ENCODE measurements at regions of chr16 and their contacts with region 1.

Region 1: DNA sequence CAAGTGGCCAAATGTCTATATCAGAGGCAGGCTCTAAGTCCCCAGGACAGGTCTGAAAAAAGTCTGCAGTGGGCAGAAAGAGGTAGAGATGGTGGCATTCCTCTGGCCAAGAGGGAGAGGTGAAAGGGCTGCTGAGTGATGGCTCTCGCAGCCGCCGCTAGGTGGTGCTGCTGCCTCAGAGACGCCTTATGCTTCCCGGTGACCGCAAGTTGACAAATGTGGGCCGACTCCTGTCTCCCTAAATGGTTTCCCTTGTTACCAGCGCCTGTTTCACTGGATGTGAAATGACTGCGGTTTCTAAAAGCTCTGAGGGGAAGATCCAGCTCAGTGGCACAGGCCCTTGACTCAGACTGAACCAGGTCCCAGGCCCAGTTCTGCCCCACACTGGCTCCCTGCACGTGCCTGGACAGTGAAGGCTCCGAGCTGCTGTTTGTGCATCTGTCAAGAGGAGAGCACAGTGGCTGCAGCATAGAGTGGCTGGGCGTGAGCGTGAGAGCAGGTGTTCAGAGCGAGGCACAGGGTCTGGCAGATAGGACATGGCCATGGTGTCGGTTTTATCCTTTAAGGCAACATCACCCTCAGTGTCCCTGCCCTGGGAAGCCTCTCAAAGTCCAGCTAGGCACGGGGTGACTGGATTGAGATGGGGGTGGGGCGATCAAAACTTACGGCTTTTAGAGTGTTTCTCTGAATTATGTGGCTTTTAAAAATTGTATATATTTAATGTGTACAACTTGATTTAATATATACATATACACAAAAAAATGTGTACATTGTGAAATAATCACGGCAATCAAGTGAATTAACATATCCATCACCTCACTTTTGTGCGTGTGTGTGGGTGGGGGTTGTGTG is 19.9 kb downstream of the CLEC16A start:
- DNase-seq: peak; percentile 74
- H3K4me3 Mint-ChIP-seq: peak overlapping the region; percentile 68
- H3K27ac Mint-ChIP-seq: peak overlapping the region; percentile 97
- H3K4me1 Mint-ChIP-seq: peaks cover 75% of the 10 kb centered on the region
- H3K27me3 Mint-ChIP-seq: no peaks in the 10 kb centered on the region

Region 2: GRCh38 chr16:10362077-10362863 is 602.0 kb before region 1 on chr16:
- intact Hi-C with region 1: no loop called
- DNase-seq: peak; percentile 11
- H3K4me3 Mint-ChIP-seq: peak overlapping the region; percentile 32
- H3K27ac Mint-ChIP-seq: peak overlapping the region; percentile 74
- H3K4me1 Mint-ChIP-seq: peaks cover 20% of the 10 kb centered on the region
- H3K27me3 Mint-ChIP-seq: no peaks in the 10 kb centered on the region

Region 3: DNA sequence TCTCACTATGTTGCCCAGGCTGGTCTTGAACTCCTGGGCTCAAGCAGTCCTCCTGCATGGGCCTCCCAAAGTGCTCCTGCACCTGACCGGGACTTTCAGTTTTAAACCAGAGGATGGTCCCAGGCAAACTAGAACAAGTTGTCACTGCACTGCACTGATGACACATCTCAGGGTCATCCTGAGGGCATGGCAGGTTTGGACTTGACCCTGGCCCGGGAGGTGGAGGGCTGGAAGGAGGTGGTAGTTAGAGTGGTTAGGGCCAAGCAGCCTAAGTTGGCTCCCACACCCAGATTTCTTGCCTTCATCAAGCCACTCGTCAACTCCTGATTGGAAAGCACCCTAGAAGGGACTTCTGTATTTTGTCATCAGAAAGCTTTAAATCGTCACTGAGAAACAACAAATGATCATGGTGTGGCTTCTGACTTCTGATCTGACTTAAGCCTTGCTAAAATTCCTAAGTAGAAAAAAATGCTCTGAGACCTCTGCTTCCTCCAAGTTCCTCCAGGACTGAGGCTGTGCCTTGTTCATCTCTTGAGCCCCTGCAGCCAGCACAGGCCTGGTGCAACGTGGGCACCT is 427.4 kb before region 1 on chr16:
- intact Hi-C with region 1: no loop called
- DNase-seq: no peak
- H3K4me3 Mint-ChIP-seq: no peak overlapping the region
- H3K27ac Mint-ChIP-seq: no peak overlapping the region
- H3K4me1 Mint-ChIP-seq: no peaks in the 10 kb centered on the region
- H3K27me3 Mint-ChIP-seq: no peaks in the 10 kb centered on the region

Region 4: DNA sequence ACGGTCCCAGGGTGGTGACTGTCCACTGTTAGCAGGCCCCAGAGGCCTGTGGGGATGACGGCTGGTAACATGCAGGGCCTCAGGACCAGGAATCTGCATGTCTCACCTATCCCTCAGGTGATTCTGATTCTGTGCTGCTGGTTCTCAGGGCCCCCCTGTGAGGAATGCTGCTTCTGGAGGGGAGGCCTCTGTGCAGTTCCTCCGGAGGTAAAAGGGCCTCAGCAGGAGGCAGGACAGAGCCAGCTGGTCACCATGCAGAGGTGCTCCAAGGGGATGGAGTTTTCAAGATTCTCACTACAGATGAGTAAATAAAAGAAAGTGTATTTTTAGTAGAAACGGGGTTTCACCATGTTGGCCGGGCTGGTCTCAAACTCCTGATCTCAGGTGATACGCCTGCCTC is 13.9 kb after region 1 on chr16:
- intact Hi-C with region 1: no loop called
- DNase-seq: no peak
- H3K4me3 Mint-ChIP-seq: no peak overlapping the region
- H3K27ac Mint-ChIP-seq: peak overlapping the region; percentile 16
- H3K4me1 Mint-ChIP-seq: peaks cover 67% of the 10 kb centered on the region
- H3K27me3 Mint-ChIP-seq: no peaks in the 10 kb centered on the region

Region 5: DNA sequence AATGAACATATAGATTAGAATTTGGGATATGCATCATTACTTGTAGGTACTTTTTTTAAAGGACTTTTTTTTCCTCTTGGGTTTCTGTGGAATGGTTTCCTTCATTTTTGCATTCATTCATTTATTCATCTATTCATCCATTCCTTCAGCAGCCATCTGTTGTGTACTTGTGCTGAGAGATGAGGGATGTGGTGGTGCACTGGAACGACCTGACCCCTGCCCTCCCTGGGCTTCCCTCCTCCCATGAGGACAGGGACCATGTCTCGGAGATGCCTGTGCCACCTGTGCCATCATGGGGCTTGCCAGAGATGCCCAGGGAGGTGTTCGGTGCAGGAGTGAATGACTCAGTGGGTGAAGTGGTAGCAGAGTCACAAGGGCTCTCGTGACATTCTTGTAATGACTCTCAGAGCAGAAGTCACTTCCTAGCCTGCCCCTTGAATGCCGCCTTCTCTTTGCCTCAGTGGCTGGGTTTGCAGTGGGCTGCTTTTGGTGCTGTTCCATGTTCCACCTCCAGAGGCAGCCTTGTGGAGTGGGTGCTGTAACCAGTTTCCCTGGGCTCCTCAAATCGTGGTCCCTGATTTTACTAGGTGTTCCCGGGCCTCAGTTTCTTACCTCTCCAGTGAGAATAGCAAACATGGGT is 24.0 kb after region 1 on chr16:
- intact Hi-C with region 1: loop called (anchors 1 kb)
- DNase-seq: peak; percentile 64
- H3K4me3 Mint-ChIP-seq: peak overlapping the region; percentile 65
- H3K27ac Mint-ChIP-seq: peak overlapping the region; percentile 93
- H3K4me1 Mint-ChIP-seq: peaks cover 92% of the 10 kb centered on the region
- H3K27me3 Mint-ChIP-seq: no peaks in the 10 kb centered on the region

Region 6: DNA sequence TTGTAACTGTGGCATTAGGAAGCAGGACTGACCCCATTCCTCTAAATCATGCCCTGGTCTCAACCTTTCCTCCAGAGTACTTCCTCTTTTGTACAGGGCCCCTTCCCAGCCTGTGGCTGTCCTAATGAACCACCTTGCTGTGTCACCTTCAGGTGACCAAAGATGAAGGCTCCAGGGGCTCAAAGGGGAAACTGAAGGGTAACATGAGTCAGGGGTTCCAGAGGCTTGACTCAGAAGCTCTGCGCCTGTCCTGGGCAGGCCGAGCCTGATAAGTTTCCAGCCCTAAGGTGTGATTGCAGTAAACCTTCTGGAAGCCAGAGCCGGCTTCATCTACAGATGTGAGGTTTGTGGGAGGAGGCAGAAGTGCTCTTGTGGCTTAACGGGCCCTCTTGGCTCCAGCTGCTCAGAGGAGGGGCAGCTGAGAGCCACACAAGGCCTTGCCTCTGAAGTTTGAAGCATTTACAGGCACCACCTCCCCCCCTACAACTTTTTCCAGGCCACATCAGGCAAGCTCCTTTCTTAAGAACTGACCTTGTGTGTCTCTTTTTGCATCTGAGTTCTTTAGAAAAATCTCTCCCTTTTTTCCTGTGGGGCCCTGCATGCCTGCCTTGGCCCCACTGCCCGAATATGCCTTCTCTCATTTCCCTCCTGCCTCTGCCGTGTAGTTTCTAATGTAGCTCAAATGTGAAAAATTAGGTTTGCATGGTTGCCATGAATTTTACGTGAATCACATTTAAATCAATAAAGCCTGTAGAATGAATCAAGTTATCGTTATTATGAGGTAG is 130.0 kb after region 1 on chr16:
- intact Hi-C with region 1: loop called (anchors 1 kb)
- DNase-seq: peak; percentile 56
- H3K4me3 Mint-ChIP-seq: peak overlapping the region; percentile 68
- H3K27ac Mint-ChIP-seq: peak overlapping the region; percentile 100
- H3K4me1 Mint-ChIP-seq: peaks cover 70% of the 10 kb centered on the region
- H3K27me3 Mint-ChIP-seq: no peaks in the 10 kb centered on the region

Region 7: GRCh38 chr16:11232852-11233726 is 268.8 kb after region 1 on chr16:
- intact Hi-C with region 1: loop called (anchors 1 kb)
- DNase-seq: peak; percentile 91
- H3K4me3 Mint-ChIP-seq: peak overlapping the region; percentile 59
- H3K27ac Mint-ChIP-seq: peak overlapping the region; percentile 95
- H3K4me1 Mint-ChIP-seq: peaks cover 89% of the 10 kb centered on the region
- H3K27me3 Mint-ChIP-seq: no peaks in the 10 kb centered on the region

Region 8: DNA sequence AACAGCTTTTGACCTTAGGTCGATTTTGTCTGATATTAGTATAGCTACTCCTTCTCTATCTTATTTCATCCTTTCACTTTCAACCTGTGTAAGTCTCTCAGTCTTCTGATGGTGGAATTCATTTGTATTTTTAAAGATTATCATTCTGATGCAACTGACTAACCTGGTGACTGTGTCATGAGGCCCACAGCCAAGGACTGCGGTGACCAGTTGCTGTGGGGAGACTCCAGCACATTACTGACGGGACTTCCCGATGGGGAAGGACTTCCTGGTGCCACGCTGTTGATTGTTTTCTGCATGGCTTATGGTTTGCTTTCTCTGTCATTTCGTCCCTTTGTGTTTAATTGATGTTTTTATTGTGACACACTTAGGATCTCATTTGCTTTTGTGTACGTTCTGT is 415.2 kb after region 1 on chr16:
- intact Hi-C with region 1: loop called (anchors 1 kb)
- DNase-seq: peak; percentile 26
- H3K4me3 Mint-ChIP-seq: no peak overlapping the region
- H3K27ac Mint-ChIP-seq: peak overlapping the region; percentile 23
- H3K4me1 Mint-ChIP-seq: peaks cover 18% of the 10 kb centered on the region
- H3K27me3 Mint-ChIP-seq: peaks cover 12% of the 10 kb centered on the region

Region 9: GRCh38 chr16:11535471-11535870 is 571.2 kb after region 1 on chr16:
- intact Hi-C with region 1: loop called (anchors 1 kb)
- DNase-seq: no peak
- H3K4me3 Mint-ChIP-seq: no peak overlapping the region
- H3K27ac Mint-ChIP-seq: no peak overlapping the region
- H3K4me1 Mint-ChIP-seq: peaks cover 8% of the 10 kb centered on the region
- H3K27me3 Mint-ChIP-seq: peaks cover 2% of the 10 kb centered on the region